AG04449 (cell line): ENCODE measurements at regions of chr19 and their contacts with region 1.

Region 1: GRCh38 chr19:46990991-46991676 is 28.5 kb upstream of the NPAS1 start:
- DNase-seq: no peak
- H3K4me3 ChIP-seq: no peak overlapping the region
- CTCF ChIP-seq: peak; percentile 80

Region 2: GRCh38 chr19:46850228-46851203 is 140.6 kb before region 1 on chr19 and contains the start of gene AP2S1:
- CTCF ChIA-PET with region 1: interaction called, 138 read pairs
- POLR2A ChIA-PET with region 1: no interaction called
- DNase-seq: peak; percentile 95
- H3K4me3 ChIP-seq: peak within 1 kb of the TSS; percentile 96
- CTCF ChIP-seq: no peak

Region 3: GRCh38 chr19:46878613-46879375 is 112.3 kb before region 1 on chr19:
- CTCF ChIA-PET with region 1: interaction called, 17 read pairs
- POLR2A ChIA-PET with region 1: no interaction called
- DNase-seq: no peak
- H3K4me3 ChIP-seq: no peak overlapping the region; the same call in 1 of the 2 replicates
- CTCF ChIP-seq: no peak

Region 4: DNA sequence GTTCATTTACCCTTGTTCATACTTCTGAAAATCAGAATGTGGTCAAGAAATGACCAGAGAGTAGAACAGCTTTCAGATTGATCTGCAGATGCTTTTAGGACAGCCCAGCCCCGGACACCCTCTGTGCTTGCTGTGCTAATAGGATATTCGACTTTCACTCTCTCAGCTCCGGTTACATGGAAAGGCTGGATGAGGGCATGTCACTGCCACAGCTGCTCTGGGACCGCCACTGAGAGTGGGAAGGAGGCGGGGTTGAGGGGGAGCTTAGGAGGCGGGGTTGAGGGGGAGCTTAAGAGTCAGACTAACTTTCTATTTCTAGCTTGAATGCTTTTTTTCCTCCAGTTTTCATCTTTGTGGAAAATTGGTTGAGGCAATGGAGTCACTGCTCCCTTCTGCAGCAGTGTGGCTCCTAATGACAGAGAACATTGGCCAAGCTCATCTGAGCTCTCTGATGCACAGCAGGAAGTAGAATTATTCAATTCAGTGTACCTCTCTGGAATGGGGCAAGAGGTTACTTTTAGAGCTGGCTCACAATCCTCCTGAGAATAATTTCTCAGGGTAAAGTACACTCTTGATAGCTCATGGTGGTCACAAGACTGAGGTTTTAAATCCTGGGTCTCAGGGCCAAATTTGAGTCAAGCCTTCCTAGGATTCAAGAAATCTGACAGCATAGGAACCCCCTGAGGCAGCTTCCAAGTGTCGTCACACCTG is 46.1 kb before region 1 on chr19:
- CTCF ChIA-PET with region 1: interaction called, 21 read pairs
- POLR2A ChIA-PET with region 1: no interaction called
- DNase-seq: no peak
- H3K4me3 ChIP-seq: peak overlapping the region; percentile 27
- CTCF ChIP-seq: no peak

Region 5: GRCh38 chr19:47005873-47006272 is 14.7 kb after region 1 on chr19:
- CTCF ChIA-PET with region 1: interaction called, 66 read pairs
- POLR2A ChIA-PET with region 1: interaction called, 3 read pairs
- DNase-seq: no peak
- H3K4me3 ChIP-seq: no peak overlapping the region
- CTCF ChIP-seq: no peak